ENCODE measurements at regions of chr7 and their contacts with region 1.

Region 1: GRCh38 chr7:30026229-30027064 is at the start of gene FKBP14:
- DNase-seq: peak; percentile 94 to 99
- H3K4me3 ChIP-seq: peak within 1 kb of the TSS; percentile 96 to 97
- H3K27ac ChIP-seq: peak within 1 kb of the TSS; percentile 91 to 96
- H3K4me1 ChIP-seq: peaks cover 0 to 21% of the 10 kb centered on the region in 2 donors
- H3K27me3 ChIP-seq: no peaks in the 10 kb centered on the region
- CTCF ChIP-seq: no peak
- total RNA-seq, gene FKBP14: 7.3 TPM

Region 2: GRCh38 chr7:29734246-29734731 is 292.2 kb before region 1 on chr7:
- intact Hi-C with region 1: no loop called
- DNase-seq: no peak
- H3K4me3 ChIP-seq: no peak overlapping the region
- H3K27ac ChIP-seq: no peak overlapping the region
- H3K4me1 ChIP-seq: no peaks in the 10 kb centered on the region
- H3K27me3 ChIP-seq: no peaks in the 10 kb centered on the region
- CTCF ChIP-seq: no peak

Region 3: DNA sequence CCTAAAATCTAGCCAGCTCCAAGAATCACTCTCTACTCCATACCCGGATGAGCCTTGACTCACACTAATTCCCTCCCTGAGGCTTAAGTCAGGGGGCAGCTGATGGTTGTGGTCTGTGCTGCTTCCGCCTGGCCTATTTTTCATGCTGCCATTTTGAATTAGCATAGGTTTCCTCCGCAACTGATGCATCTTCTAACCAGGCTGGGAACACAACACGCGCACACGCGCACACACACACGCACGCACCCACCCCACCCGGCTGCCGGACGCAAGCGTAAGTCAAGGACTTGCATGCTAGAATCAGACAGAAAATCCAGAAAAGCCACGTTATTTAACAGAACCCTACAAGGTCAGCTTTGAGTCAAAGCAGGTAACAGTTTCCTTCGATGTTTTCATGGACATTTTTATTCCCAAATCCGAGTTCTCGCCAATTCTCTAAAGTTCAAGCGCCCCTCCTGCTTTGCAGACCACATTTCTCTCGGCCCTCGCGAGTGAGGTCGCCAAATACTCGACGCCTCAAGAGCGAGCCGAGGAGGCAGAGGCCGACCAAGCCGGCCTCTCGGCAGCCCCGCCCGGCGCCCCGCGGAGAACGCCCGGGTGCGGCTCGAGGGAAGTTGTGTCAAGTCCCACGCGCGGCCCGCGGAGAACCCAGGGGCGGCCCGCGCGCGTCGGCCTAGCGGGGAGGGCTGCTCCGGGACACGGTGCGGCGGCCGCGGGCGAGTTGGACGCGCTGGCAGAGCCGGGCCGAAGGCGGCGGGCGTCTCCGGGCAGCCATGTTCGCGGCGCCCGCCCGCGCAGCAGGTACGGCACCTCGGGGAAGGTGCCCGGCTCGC is 37.8 kb before region 1 on chr7:
- intact Hi-C with region 1: loop called (anchors 1 kb)
- DNase-seq: peak in 1 of 2 donors; percentile 68
- H3K4me3 ChIP-seq: peak overlapping the region; percentile 94 to 97
- H3K27ac ChIP-seq: peak overlapping the region; percentile 97
- H3K4me1 ChIP-seq: peaks cover 0 to 9% of the 10 kb centered on the region in 2 donors
- H3K27me3 ChIP-seq: no peaks in the 10 kb centered on the region
- CTCF ChIP-seq: no peak

Region 4: GRCh38 chr7:30068067-30068466 is 41.6 kb after region 1 on chr7:
- intact Hi-C with region 1: loop called (anchors 1 kb)
- DNase-seq: no peak
- H3K4me3 ChIP-seq: no peak overlapping the region
- H3K27ac ChIP-seq: peak overlapping the region; percentile 12 to 17
- H3K4me1 ChIP-seq: peaks cover 0 to 12% of the 10 kb centered on the region in 2 donors
- H3K27me3 ChIP-seq: no peaks in the 10 kb centered on the region
- CTCF ChIP-seq: no peak

Region 5: GRCh38 chr7:30173058-30173897 is 146.8 kb after region 1 on chr7:
- intact Hi-C with region 1: loop called (anchors 1 kb)
- DNase-seq: peak; percentile 40 to 90
- H3K4me3 ChIP-seq: peak overlapping the region in 1 of 2 donors; percentile 34
- H3K27ac ChIP-seq: peak overlapping the region; percentile 66 to 86
- H3K4me1 ChIP-seq: peaks cover 32 to 69% of the 10 kb centered on the region in 2 donors
- H3K27me3 ChIP-seq: no peaks in the 10 kb centered on the region
- CTCF ChIP-seq: peak in 1 of 3 experiments; percentile 35

Region 6: DNA sequence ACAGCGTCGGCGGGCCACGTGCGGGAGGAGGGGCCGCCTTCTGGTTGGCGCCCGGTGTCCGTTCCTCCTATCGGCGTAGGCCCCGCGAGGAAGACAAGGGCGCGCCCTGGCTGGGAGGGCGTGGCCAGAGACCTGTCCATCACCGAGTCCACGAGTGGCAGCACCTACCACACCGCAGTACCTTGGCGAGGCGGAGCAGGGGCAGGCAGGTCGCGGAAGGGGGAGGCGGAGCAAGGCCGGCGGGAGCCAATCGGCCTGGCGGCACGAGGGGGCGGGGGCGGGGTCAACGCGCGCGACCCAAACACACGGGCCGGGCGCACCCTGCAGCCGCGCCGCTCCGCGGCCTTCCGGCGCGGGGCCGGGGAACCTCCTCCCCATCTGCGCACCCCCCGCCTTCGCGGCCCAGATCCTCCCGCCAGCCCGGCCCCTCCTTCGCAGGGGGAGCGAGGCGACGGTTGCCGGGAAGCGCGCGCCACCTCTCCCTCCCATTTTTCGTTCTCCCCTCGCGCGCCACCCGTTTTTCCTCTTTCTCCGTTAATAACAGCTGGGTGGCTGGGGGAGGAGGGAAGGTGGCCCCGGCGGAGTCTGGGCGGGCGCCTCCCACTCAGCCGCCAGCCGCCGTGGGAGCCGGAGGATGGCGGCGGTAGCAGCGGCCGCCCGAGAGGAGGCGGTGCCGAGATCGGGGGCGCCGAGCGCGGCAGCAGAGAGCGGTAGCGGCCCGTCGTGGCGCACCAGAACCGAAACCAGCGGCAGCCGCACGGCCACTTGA is 258.0 kb after region 1 on chr7 and contains the start of gene ZNRF2:
- intact Hi-C with region 1: loop called (anchors 5 kb)
- DNase-seq: peak; percentile 99 to 100
- H3K4me3 ChIP-seq: peak within 1 kb of the TSS; percentile 77 to 84
- H3K27ac ChIP-seq: peak within 1 kb of the TSS; percentile 99
- H3K4me1 ChIP-seq: peaks cover 0 to 14% of the 10 kb centered on the region in 2 donors
- H3K27me3 ChIP-seq: no peaks in the 10 kb centered on the region
- CTCF ChIP-seq: peak; percentile 15 to 66 (median 57)
- total RNA-seq, gene ZNRF2: 31.7 TPM

Region 7: DNA sequence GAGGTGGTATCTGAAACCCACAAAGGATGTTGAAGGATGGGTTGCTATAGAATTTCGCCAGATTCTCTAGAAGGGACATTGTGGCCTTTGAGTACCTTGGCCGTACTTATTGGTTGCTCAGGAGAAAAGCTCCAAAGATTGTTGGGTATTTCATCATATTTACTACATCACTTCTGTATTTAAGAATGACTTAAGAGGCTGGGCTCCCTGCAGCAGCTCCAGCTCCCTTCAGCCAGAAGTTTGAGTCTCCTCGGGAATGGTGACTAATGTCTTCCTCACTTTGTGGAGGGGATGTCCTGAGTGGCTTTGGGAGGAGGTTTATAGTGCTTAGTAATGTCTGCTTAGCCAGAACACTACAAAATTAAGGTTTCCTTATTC is 762.9 kb after region 1 on chr7:
- intact Hi-C with region 1: loop called (anchors 10 kb)
- DNase-seq: peak; percentile 54 to 87
- H3K4me3 ChIP-seq: no peak overlapping the region
- H3K27ac ChIP-seq: peak overlapping the region; percentile 76 to 95
- H3K4me1 ChIP-seq: peaks cover 3 to 12% of the 10 kb centered on the region in 2 donors
- H3K27me3 ChIP-seq: no peaks in the 10 kb centered on the region
- CTCF ChIP-seq: no peak

Measured in ascending aorta (tissue), 2 donors.